Naive thymus-derived CD4-positive, alpha-beta T cell (primary cell): ENCODE measurements at regions of chr3 and their contacts with region 1.

Region 1: GRCh38 chr3:134250717-134251220 is at the start of gene RYK:
- DNase-seq: peak; percentile 65 to 85 (median 79)
- ATAC-seq: peak; percentile 93
- H3K4me3 ChIP-seq: peak within 1 kb of the TSS; percentile 78
- H3K4me3 Mint-ChIP-seq: peak within 1 kb of the TSS; percentile 90 to 99 (median 96)
- H3K27ac ChIP-seq: peak within 1 kb of the TSS; percentile 86
- H3K27ac Mint-ChIP-seq: peak within 1 kb of the TSS; percentile 72 to 99 (median 95)
- H3K4me1 ChIP-seq: peaks cover 12 to 14% of the 10 kb centered on the region in 2 donors
- H3K4me1 Mint-ChIP-seq: peaks cover 25 to 62% (median 57%) of the 10 kb centered on the region in 7 donors
- H3K27me3 ChIP-seq: no peaks in the 10 kb centered on the region
- H3K27me3 Mint-ChIP-seq: peaks cover 0 to 54% (median 0%) of the 10 kb centered on the region in 5 donors
- total RNA-seq, gene RYK: 10.7 to 53.5 (median 50.5) TPM

Region 2: DNA sequence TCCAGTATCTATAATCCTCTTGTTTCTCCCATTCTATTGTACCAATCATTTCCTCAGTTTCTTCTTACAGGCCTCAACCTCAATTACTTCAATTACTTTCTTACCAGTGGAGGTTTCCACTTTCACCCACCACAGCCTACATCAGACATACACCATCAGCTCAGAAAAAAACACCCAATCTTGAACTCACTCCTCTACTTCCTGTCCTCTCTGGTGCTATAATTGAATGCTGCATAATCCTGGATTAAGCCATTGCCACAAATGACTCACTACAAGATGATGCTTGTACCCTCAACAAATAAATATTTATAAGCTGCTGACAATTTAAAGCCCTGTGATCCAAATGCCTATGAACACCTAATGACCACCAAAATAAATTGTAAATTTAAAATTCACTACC is 18.6 kb before region 1 on chr3:
- CTCF ChIA-PET with region 1: no interaction called
- POLR2A ChIA-PET with region 1: interaction called, 4 read pairs
- intact Hi-C with region 1: loop called in 1 of 2 experiments (anchors 2 kb)
- DNase-seq: no peak
- ATAC-seq: peak; percentile 56
- H3K4me3 ChIP-seq: no peak overlapping the region
- H3K4me3 Mint-ChIP-seq: peak overlapping the region in 6 of 10 donors; percentile 29 to 53 (median 40)
- H3K27ac ChIP-seq: no peak overlapping the region
- H3K27ac Mint-ChIP-seq: peak overlapping the region in 4 of 9 donors; percentile 4 to 78 (median 16)
- H3K4me1 ChIP-seq: peaks cover 12 to 13% of the 10 kb centered on the region in 2 donors
- H3K4me1 Mint-ChIP-seq: peaks cover 18 to 97% (median 79%) of the 10 kb centered on the region in 7 donors
- H3K27me3 ChIP-seq: no peaks in the 10 kb centered on the region
- H3K27me3 Mint-ChIP-seq: peaks cover 0 to 16% (median 0%) of the 10 kb centered on the region in 5 donors

Region 3: GRCh38 chr3:134299185-134299887 is 48.6 kb after region 1 on chr3:
- CTCF ChIA-PET with region 1: no interaction called
- POLR2A ChIA-PET with region 1: interaction called, 3 read pairs
- intact Hi-C with region 1: loop called (anchors 2 kb)
- DNase-seq: peak in 1 of 9 donors; percentile 12
- ATAC-seq: no peak
- H3K4me3 ChIP-seq: no peak overlapping the region
- H3K4me3 Mint-ChIP-seq: no peak overlapping the region
- H3K27ac ChIP-seq: no peak overlapping the region
- H3K27ac Mint-ChIP-seq: peak overlapping the region in 1 of 9 donors; percentile 14
- H3K4me1 ChIP-seq: peaks cover 8 to 9% of the 10 kb centered on the region in 2 donors
- H3K4me1 Mint-ChIP-seq: peaks cover 0 to 3% (median 0%) of the 10 kb centered on the region in 7 donors
- H3K27me3 ChIP-seq: no peaks in the 10 kb centered on the region
- H3K27me3 Mint-ChIP-seq: peaks cover 2 to 55% (median 14%) of the 10 kb centered on the region in 5 donors